ENCODE measurements at regions of chr18 and their contacts with region 1.

Region 1: DNA sequence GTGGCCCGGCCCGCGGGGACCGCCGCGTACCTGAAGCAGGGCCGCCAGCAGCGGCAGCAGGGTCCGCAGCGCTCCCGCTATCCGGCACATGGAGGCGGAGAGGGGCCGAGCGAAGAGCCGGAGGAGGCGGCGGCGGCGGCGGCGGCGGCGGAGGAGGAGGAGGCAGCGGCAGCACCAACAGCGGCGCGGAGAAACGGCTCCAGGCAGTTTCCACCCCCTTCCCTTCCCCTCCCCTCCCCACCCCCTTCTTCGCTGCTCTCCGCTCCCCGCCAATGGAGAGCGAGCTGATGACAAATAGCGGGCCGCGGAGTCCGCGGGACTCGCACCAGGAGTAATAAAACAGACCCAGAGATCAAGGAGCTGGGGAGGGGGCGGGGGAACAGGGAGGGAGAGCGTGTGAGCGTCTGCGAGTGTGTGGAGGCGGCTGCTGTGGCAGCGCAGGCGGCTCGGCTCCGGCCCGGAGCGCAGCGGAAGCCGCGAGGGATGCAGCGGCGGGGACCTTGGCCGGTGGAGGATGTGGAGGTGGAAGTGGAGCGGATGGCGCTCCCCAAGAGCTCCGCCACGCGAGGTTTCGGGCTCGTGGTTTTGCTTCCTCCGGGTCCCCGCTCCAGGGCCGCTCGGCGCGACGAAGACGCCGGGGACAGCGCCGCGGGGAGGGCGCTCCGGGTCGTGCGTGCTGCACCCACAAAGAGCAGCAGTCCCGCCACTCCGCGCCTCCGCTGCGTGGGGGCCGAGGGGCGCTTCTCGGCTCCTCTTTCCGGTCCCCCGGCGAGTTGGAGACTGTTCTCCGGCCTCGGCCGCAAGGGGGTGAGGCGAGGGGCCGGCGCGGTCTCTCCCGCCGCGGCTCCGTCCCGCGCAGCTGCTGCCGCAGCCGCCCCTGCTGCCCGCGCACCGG is at the start of gene CDH2:
- DNase-seq: peak; percentile 82
- ATAC-seq: peak; percentile 51
- H3K4me3 ChIP-seq: peak within 1 kb of the TSS; percentile 93
- H3K27ac ChIP-seq: peak within 1 kb of the TSS; percentile 22; the same call in 1 of the 2 replicates
- H3K4me1 ChIP-seq: peaks cover 57% of the 10 kb centered on the region
- H3K27me3 ChIP-seq: no peaks in the 10 kb centered on the region
- CTCF ChIP-seq: no peak; the same call in 1 of the 2 replicates
- total RNA-seq, gene CDH2: 34.0 and 39.2 TPM in 2 replicates

Region 2: GRCh38 chr18:27520401-27520800 is 656.8 kb before region 1 on chr18:
- CTCF ChIA-PET with region 1: no interaction called
- POLR2A ChIA-PET with region 1: no interaction called
- intact Hi-C with region 1: no loop called
- DNase-seq: no peak
- ATAC-seq: no peak
- H3K4me3 ChIP-seq: no peak overlapping the region
- H3K27ac ChIP-seq: no peak overlapping the region
- H3K4me1 ChIP-seq: no peaks in the 10 kb centered on the region
- H3K27me3 ChIP-seq: peaks cover 23% of the 10 kb centered on the region
- CTCF ChIP-seq: no peak

Region 3: DNA sequence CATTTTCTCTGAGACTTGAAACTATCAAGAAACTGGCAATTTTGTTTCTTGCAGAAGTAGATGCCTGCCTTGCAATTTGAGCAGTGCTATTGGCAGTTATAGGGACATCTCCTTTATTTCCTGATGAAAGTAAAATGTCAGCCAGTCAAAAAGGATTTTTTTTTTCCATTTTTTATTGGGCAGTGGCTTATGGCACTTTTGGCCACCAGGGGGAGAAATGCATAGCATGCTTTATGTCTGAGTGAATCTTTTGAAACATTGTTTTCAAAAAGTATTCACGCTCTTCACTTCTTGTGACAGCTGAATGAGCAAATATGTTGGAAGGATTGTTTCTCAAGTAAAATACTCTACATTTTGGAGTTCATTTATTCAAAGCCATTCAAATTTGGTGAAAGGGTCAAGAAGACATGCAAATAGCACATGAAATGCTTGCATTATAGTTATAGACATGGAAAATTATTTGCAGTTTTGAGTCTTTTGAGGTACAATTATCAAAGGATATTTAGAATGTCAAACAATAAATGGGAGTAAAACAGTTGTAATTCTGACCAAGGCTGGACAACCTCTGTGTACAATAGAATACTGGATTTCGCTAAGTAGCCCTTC is 491.3 kb before region 1 on chr18:
- CTCF ChIA-PET with region 1: no interaction called
- POLR2A ChIA-PET with region 1: no interaction called
- intact Hi-C with region 1: loop called (anchors 5 kb)
- DNase-seq: peak; percentile 69
- ATAC-seq: peak; percentile 27; the same call in 1 of the 2 replicates
- H3K4me3 ChIP-seq: no peak overlapping the region
- H3K27ac ChIP-seq: no peak overlapping the region
- H3K4me1 ChIP-seq: no peaks in the 10 kb centered on the region
- H3K27me3 ChIP-seq: no peaks in the 10 kb centered on the region
- CTCF ChIP-seq: peak; percentile 91

Region 4: DNA sequence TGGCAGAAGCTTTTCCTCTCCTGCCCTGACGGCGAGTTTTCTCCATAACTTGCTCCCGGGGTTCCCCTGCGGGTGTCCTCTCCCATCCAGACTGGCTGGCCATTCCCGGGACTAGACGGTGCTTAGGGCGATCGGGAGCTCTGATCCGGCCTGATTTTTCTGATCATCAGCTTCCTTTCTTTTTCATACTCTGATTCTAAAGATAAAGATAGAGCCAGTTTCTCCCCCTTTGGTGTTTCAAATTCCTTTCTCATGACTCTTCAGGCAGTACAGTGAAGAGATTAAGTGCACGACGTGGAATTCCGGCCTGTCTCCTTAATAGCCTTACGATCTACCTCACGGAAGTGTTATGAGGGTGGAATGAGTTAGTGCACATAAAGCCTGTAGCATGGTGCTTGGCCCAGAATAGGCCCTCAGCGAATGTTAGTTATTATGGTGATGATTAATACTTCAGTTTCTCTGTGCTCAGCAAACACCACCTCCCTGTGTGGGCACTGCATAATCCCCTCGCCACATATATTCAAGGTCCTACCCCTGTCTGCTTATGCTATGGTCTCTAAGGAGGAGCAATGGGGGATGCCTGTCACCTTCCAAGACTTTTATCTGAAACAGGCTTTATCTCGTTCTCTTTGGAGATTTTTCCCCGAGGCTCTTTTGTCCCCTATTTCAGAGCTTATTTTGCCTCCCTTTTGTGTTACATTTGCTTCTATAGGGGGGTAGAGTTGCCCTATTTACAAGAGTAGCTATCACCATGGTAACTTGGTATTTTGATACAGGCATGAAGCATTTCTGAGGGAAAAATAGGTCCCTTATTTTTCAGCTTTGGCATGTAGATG is 255.1 kb before region 1 on chr18:
- CTCF ChIA-PET with region 1: no interaction called
- POLR2A ChIA-PET with region 1: no interaction called
- intact Hi-C with region 1: loop called (anchors 5 kb)
- DNase-seq: peak; percentile 94
- ATAC-seq: peak; percentile 100
- H3K4me3 ChIP-seq: peak overlapping the region; percentile 66
- H3K27ac ChIP-seq: peak overlapping the region; percentile 83
- H3K4me1 ChIP-seq: peaks cover 25% of the 10 kb centered on the region
- H3K27me3 ChIP-seq: no peaks in the 10 kb centered on the region
- CTCF ChIP-seq: no peak

Region 5: GRCh38 chr18:27942701-27943100 is 234.5 kb before region 1 on chr18:
- CTCF ChIA-PET with region 1: no interaction called
- POLR2A ChIA-PET with region 1: no interaction called
- intact Hi-C with region 1: no loop called
- DNase-seq: peak; percentile 24
- ATAC-seq: peak; percentile 15; the same call in 1 of the 2 replicates
- H3K4me3 ChIP-seq: no peak overlapping the region
- H3K27ac ChIP-seq: no peak overlapping the region
- H3K4me1 ChIP-seq: no peaks in the 10 kb centered on the region
- H3K27me3 ChIP-seq: no peaks in the 10 kb centered on the region
- CTCF ChIP-seq: no peak

Region 6: DNA sequence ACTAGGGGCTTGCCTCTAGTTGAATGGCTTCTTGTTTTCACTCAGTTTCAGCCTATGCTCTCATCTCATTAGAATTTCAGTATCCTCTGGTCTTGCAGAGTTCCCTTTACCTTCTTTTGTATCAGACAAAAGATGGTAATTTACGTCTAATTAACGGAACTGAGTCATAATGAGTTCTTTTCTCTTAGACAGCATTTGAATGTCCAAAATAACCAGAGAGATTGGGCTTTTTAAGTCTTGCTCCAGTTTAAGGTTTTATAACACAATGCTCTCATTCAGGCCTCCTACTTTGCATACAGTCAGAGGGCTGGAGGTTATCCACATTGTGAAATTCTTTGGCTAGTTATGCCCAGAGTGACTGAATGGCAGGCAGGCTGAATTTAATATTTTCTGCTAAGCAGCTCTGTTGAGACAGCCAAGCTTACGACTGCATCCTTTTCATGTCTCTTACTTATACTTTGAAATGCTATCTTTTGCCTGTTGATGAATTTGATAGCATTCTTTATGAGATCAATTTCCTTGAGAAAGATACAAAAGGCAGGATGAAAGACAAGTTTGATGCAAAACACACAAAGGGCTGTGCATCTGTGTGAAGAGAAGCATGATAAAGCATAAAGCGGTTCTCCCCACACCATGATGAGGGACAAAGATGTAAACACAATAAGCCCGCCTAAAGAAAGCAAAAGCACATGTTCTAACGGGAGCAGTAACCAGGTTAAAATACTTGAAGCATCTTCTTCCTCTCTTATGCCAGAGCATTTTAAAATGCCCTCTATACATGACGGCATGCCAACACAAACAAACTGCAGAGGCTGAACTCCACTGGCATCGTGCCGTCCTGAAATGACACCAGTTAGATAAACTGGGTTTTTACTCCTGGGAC is 90.3 kb before region 1 on chr18:
- CTCF ChIA-PET with region 1: no interaction called
- POLR2A ChIA-PET with region 1: interaction called, 11 read pairs
- intact Hi-C with region 1: no loop called
- DNase-seq: no peak
- ATAC-seq: no peak; the same call in 1 of the 2 replicates
- H3K4me3 ChIP-seq: no peak overlapping the region
- H3K27ac ChIP-seq: no peak overlapping the region
- H3K4me1 ChIP-seq: no peaks in the 10 kb centered on the region
- H3K27me3 ChIP-seq: no peaks in the 10 kb centered on the region
- CTCF ChIP-seq: no peak

Region 7: DNA sequence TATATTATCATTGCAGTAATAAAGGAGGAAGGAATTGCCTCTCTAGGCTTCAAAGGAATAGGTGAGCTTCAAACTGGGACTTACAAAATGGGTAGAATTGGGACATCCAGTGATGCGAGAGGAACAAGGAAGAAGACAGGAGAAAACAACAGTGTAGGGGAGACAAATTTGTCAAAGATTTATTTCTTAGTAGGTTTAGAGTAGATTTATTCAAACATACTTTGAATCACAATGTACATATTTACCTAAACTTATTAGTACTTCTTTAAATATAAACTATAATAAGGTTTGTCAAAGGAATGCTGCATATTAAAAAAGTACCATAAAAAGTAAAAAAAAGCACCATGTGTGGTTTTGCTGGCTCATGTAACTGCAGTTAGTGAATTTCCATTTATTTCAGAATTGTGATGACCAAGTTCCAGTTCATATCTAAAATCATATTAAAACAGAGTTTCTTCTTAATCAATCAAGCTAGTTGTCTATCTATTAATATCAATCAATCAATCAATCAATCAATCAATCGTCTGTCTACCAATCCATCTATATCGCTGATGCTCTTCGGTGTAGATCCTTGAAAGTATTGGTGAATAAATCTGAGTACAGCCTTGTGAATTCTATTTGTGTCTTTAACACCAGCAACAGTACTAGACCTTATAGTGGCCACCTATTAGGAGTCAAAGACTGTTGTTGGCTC is 161.3 kb after region 1 on chr18:
- CTCF ChIA-PET with region 1: no interaction called
- POLR2A ChIA-PET with region 1: no interaction called
- intact Hi-C with region 1: loop called (anchors 5 kb)
- DNase-seq: peak; percentile 13
- ATAC-seq: peak; percentile 93
- H3K4me3 ChIP-seq: no peak overlapping the region
- H3K27ac ChIP-seq: no peak overlapping the region
- H3K4me1 ChIP-seq: no peaks in the 10 kb centered on the region
- H3K27me3 ChIP-seq: no peaks in the 10 kb centered on the region
- CTCF ChIP-seq: no peak

Region 8: GRCh38 chr18:28411806-28412205 is 234.6 kb after region 1 on chr18:
- CTCF ChIA-PET with region 1: no interaction called
- POLR2A ChIA-PET with region 1: no interaction called
- intact Hi-C with region 1: no loop called
- DNase-seq: no peak
- ATAC-seq: no peak
- H3K4me3 ChIP-seq: no peak overlapping the region
- H3K27ac ChIP-seq: no peak overlapping the region
- H3K4me1 ChIP-seq: no peaks in the 10 kb centered on the region
- H3K27me3 ChIP-seq: no peaks in the 10 kb centered on the region
- CTCF ChIP-seq: no peak

Region 9: DNA sequence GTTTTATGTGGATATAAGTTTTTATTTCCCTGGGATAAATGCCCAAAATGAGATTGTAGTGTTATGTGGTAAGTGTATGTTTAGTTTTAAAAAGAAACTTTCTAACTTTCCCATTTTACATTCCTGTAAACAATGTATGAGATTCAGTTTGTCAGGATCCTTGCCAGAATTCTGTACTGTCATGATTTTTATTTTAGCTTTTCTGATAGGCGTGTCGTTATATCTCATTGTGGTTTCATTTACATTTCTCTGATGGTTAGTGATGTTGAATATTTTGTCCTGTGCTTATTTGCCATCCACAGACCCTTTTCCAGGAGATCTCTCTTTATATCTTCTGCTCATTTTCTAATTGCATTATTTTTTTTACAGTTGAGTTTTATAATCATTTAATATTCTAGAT is 245.4 kb after region 1 on chr18:
- CTCF ChIA-PET with region 1: interaction called, 7 read pairs
- POLR2A ChIA-PET with region 1: interaction called, 4 read pairs
- intact Hi-C with region 1: loop called (anchors 5 kb)
- DNase-seq: peak; percentile 37
- ATAC-seq: peak; percentile 59
- H3K4me3 ChIP-seq: peak overlapping the region; percentile 76
- H3K27ac ChIP-seq: peak overlapping the region; percentile 74
- H3K4me1 ChIP-seq: 0 out of 2 replicates have a peak, but pooled peaks cover 5% of the 10 kb centered on the region
- H3K27me3 ChIP-seq: no peaks in the 10 kb centered on the region
- CTCF ChIP-seq: no peak

Region 10: GRCh38 chr18:29154758-29155725 is 977.9 kb after region 1 on chr18:
- CTCF ChIA-PET with region 1: no interaction called
- POLR2A ChIA-PET with region 1: no interaction called
- intact Hi-C with region 1: loop called (anchors 10 kb)
- DNase-seq: peak; percentile 97
- ATAC-seq: peak; percentile 68
- H3K4me3 ChIP-seq: peak overlapping the region; percentile 47
- H3K27ac ChIP-seq: peak overlapping the region; percentile 95
- H3K4me1 ChIP-seq: peaks cover 49% of the 10 kb centered on the region
- H3K27me3 ChIP-seq: no peaks in the 10 kb centered on the region
- CTCF ChIP-seq: no peak